CD8-positive, alpha-beta T cell (primary cell): ENCODE measurements at regions of chr6 and their contacts with region 1.

Region 1: GRCh38 chr6:75284632-75285286 is at the start of gene TMEM30A:
- DNase-seq: peak; percentile 89 to 100 (median 96)
- ATAC-seq: peak; percentile 96
- H3K4me3 ChIP-seq: peak within 1 kb of the TSS; percentile 65 to 97
- H3K4me3 Mint-ChIP-seq: no peak within 1 kb of the TSS
- H3K27ac ChIP-seq: peak within 1 kb of the TSS; percentile 72 to 88
- H3K27ac Mint-ChIP-seq: no peak within 1 kb of the TSS
- H3K4me1 ChIP-seq: peaks cover 47% of the 10 kb centered on the region
- H3K4me1 Mint-ChIP-seq: peaks cover 44% of the 10 kb centered on the region
- H3K27me3 ChIP-seq: no peaks in the 10 kb centered on the region
- H3K27me3 Mint-ChIP-seq: no peaks in the 10 kb centered on the region
- CTCF ChIP-seq: no peak
- total RNA-seq, gene TMEM30A: 19.4 to 27.1 TPM

Region 2: DNA sequence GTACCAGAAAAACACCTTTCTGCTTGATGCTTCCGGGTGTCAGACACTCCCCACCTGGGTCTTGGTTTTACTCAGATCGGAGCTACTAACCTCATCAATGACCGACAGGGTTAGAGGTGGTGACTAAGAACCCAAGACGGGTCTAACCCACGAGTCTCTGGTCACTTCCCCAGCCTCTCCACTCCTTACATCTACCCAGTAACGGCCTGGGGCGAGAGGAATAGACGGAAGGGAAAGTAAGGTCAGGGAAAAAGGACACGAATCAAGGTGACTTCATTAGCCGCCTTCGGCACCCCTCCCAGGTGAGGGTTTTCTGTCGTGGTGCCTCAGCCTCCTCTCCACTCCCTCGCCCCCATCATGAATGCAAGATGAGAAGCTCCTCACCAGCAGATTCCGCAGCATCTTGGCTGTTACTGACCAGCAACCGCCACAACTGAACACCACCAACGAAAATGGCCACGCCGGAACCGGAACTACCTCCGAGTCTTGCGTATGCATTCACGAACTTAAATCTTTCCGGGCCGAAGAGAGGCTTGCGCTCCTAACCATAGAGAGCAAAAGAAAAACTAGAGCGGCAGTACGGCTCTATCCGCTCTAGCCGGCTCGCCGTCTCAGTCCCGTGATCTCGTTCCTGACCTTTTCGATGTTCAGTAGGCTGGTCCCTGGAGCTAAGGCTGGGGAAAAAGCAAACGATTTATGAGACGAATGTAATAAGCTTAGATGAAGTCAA is 41.3 kb before region 1 on chr6 and contains the start of gene COX7A2:
- CTCF ChIA-PET with region 1: interaction called, 6 read pairs
- POLR2A ChIA-PET with region 1: interaction called, 12 read pairs
- intact Hi-C with region 1: loop called (anchors 1 kb)
- DNase-seq: peak; percentile 71 to 94 (median 87)
- ATAC-seq: peak; percentile 94
- H3K4me3 ChIP-seq: peak within 1 kb of the TSS; percentile 94 to 98
- H3K4me3 Mint-ChIP-seq: peak within 1 kb of the TSS; percentile 99
- H3K27ac ChIP-seq: peak within 1 kb of the TSS; percentile 93 to 97
- H3K27ac Mint-ChIP-seq: peak within 1 kb of the TSS; percentile 100
- H3K4me1 ChIP-seq: peaks cover 6% of the 10 kb centered on the region
- H3K4me1 Mint-ChIP-seq: peaks cover 36% of the 10 kb centered on the region
- H3K27me3 ChIP-seq: no peaks in the 10 kb centered on the region
- H3K27me3 Mint-ChIP-seq: peaks cover 6% of the 10 kb centered on the region
- CTCF ChIP-seq: no peak
- total RNA-seq, gene COX7A2: 221 to 229 TPM

Region 3: DNA sequence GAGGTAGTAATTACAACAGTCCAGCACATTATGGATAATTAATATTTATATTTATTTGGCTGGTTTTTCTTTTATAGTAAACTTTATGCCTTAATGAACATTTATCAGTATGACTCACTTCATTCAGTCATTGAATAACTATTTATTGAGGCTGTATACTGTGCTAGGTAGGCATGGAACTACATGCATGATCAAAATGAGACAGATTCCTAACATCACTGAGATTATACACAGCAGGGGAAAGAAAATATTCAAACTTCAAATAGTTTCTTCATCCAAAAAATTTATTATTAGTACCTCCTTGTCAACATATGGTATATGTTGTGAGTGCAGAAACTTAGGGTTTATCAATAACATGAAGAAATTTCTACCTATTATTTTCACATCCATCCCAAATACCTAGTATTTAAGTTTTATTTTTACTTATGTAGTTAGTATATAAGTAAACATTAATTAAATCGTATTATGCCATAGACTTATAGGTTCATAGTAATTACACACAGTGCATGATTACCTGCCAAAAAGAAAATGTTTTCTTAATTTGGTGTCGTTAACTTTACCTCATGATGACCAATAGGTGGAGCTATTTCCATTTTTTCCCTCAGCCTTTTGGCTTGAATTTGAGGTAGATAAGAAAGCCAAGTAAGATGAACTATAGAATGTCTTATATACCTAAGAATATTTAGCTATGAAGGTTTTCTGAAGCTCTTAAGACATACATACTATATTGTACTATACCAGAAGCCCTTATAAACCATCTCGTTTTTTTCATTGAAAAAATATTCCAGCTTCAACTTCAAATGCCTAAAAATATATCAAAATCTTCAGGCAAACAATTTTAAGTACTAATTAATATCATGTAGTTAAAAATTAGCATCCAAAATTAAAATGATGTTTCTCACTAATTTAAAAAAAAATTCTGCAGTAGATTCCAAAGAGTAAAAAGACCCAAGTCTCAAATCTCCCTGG is 12.3 kb after region 1 on chr6:
- CTCF ChIA-PET with region 1: interaction called, 3 read pairs
- POLR2A ChIA-PET with region 1: interaction called, 3 read pairs
- intact Hi-C with region 1: loop called in 1 of 2 experiments (anchors 1 kb)
- DNase-seq: peak in 2 of 9 experiments; percentile 65 to 76
- ATAC-seq: peak; percentile 54
- H3K4me3 ChIP-seq: no peak overlapping the region
- H3K4me3 Mint-ChIP-seq: no peak overlapping the region
- H3K27ac ChIP-seq: no peak overlapping the region
- H3K27ac Mint-ChIP-seq: no peak overlapping the region
- H3K4me1 ChIP-seq: no peaks in the 10 kb centered on the region
- H3K4me1 Mint-ChIP-seq: no peaks in the 10 kb centered on the region
- H3K27me3 ChIP-seq: no peaks in the 10 kb centered on the region
- H3K27me3 Mint-ChIP-seq: no peaks in the 10 kb centered on the region
- CTCF ChIP-seq: peak; percentile 79

Region 4: DNA sequence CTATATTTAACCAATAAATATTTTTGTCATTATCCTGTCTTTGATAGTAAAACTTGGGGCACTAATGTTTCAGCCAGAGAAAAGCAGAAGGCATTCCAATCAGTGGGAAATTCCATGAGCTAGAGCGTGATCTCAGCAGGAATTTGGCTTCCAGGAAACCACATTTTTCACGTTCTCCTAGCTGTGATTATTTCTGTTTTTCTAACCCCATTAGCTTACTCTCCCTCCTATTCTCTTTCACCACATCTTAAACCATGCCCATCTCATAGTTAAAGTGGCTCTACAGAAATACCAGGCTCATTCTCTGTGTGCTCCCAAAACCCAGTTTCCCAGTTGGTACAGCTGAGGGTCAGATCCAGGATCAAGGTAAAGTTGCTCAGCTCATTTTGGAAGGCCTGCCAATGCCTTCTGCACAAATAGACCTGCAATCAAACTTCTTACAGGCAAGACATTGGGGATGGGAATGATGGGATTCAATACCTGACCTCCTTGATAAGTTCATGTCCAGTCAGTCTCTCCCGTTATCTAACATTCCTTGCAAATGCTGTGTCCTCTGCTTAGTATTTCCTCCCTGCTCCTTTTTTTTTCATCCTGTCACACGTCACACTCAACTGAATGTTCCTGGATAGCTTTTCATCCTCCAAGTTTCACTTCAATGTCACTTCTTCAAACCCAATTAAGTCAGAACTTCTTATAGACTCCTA is 32.9 kb after region 1 on chr6:
- CTCF ChIA-PET with region 1: no interaction called
- POLR2A ChIA-PET with region 1: no interaction called
- intact Hi-C with region 1: no loop called
- DNase-seq: no peak
- ATAC-seq: no peak
- H3K4me3 ChIP-seq: no peak overlapping the region
- H3K4me3 Mint-ChIP-seq: no peak overlapping the region
- H3K27ac ChIP-seq: no peak overlapping the region
- H3K27ac Mint-ChIP-seq: no peak overlapping the region
- H3K4me1 ChIP-seq: no peaks in the 10 kb centered on the region
- H3K4me1 Mint-ChIP-seq: no peaks in the 10 kb centered on the region
- H3K27me3 ChIP-seq: peaks cover 0 to 4% of the 10 kb centered on the region in 2 experiments
- H3K27me3 Mint-ChIP-seq: peaks cover 59% of the 10 kb centered on the region
- CTCF ChIP-seq: no peak